Activated CD8-positive, alpha-beta T cell treated with anti-CD3 and anti-CD28 coated beads for 36 hours (primary cell): ENCODE measurements at regions of chr3 and their contacts with region 1.

Region 1: DNA sequence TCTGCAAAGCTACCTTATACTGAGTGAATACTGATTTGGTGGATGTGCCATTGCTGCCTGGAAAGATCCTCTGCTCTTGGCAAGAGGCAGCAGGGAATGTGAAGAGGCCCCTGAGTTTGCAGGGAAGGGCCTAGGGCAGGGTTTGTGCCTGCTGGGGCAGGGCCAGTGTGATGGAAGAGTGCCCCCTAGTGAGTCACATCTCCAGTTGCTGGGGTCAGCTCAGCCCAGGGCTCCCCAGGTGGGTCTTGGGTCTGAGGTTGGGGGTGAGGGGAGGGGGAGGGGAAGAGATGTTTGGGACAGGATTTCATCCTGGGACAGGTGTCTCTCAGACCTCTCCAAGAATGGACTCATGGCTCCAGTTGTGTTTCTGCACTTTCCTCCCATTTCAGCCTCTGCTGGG is 4.1 kb upstream of the AMOTL2 start:
- DNase-seq: peak; percentile 40
- ATAC-seq: peak; percentile 57
- H3K4me3 Mint-ChIP-seq: no peak overlapping the region
- H3K27ac Mint-ChIP-seq: no peak overlapping the region
- H3K4me1 Mint-ChIP-seq: peaks cover 8% of the 10 kb centered on the region
- H3K27me3 Mint-ChIP-seq: peaks cover 39% of the 10 kb centered on the region
- CTCF ChIP-seq: peak; percentile 36

Region 2: DNA sequence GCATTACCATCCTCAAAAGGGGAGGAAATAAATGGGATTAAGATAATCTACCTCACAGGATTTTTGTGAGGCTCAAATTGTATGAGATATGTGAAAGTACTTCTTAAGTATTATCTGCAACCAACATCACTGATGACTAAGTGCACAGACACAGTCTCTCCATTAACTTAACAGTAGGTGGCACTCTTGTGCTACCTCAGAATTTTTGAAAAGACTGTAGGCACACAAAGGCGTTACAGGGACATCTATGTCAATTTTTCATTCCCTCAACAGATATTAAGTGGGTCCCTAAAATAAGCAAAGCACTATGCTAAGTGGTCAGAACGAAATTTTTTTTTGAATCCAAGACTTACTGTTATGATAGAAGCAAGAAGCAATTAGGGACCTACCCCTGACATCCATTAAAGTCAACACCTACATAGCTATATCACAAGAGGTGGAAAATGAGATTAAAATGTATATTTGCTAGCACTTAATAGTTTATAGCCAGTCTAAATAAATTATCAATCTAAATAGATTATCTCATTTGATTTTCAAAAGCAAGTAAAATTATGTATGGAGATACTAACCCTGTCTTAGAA is 180.6 kb before region 1 on chr3:
- CTCF ChIA-PET with region 1: interaction called, 11 read pairs
- POLR2A ChIA-PET with region 1: no interaction called
- intact Hi-C with region 1: no loop called
- DNase-seq: no peak
- ATAC-seq: peak; percentile 88
- H3K4me3 Mint-ChIP-seq: no peak overlapping the region
- H3K27ac Mint-ChIP-seq: no peak overlapping the region
- H3K4me1 Mint-ChIP-seq: peaks cover 8% of the 10 kb centered on the region
- H3K27me3 Mint-ChIP-seq: no peaks in the 10 kb centered on the region
- CTCF ChIP-seq: peak; percentile 77